ENCODE measurements at regions of chr5 and their contacts with region 1.

Region 1: GRCh38 chr5:111530298-111530740 is 18.0 kb upstream of the STARD4 start:
- DNase-seq: peak; percentile 57
- ATAC-seq: peak; percentile 98
- H3K4me3 ChIP-seq: no peak overlapping the region
- H3K27ac ChIP-seq: peak overlapping the region; percentile 37; the same call in 1 of the 2 replicates
- H3K4me1 ChIP-seq: peaks cover 4% of the 10 kb centered on the region
- H3K27me3 ChIP-seq: no peaks in the 10 kb centered on the region
- CTCF ChIP-seq: no peak
- EP300 ChIP-seq: no peak
- POLR2A ChIP-seq: peak; percentile 39; the same call in 1 of the 2 replicates
- RAD21 ChIP-seq: no peak

Region 2: GRCh38 chr5:111494364-111494999 is 35.8 kb before region 1 on chr5:
- CTCF ChIA-PET with region 1: interaction called, 13 read pairs
- POLR2A ChIA-PET with region 1: no interaction called
- RAD21 ChIA-PET with region 1: interaction called, 3 read pairs
- SMC1A ChIA-PET with region 1: interaction called, 6 read pairs
- in situ Hi-C with region 1: no loop called
- intact Hi-C with region 1: no loop called
- DNase-seq: peak; percentile 35
- ATAC-seq: peak; percentile 50
- H3K4me3 ChIP-seq: no peak overlapping the region
- H3K27ac ChIP-seq: peak overlapping the region; percentile 62
- H3K4me1 ChIP-seq: peaks cover 15% of the 10 kb centered on the region; the same call in 1 of the 2 replicates
- H3K27me3 ChIP-seq: no peaks in the 10 kb centered on the region
- CTCF ChIP-seq: no peak
- EP300 ChIP-seq: peak in 1 of 2 experiments; percentile 14; a peak in 1 of 4 replicates
- POLR2A ChIP-seq: no peak
- RAD21 ChIP-seq: no peak

Region 3: GRCh38 chr5:111517853-111518501 is 12.3 kb before region 1 on chr5:
- CTCF ChIA-PET with region 1: interaction called, 80 read pairs
- POLR2A ChIA-PET with region 1: interaction called, 5 read pairs
- RAD21 ChIA-PET with region 1: interaction called, 4 read pairs
- SMC1A ChIA-PET with region 1: interaction called, 49 read pairs
- in situ Hi-C with region 1: no loop called
- intact Hi-C with region 1: no loop called
- DNase-seq: peak; percentile 64
- ATAC-seq: peak; percentile 81
- H3K4me3 ChIP-seq: no peak overlapping the region
- H3K27ac ChIP-seq: peak overlapping the region; percentile 54
- H3K4me1 ChIP-seq: peaks cover 19% of the 10 kb centered on the region
- H3K27me3 ChIP-seq: no peaks in the 10 kb centered on the region
- CTCF ChIP-seq: no peak
- EP300 ChIP-seq: peak in 1 of 2 experiments; percentile 40; a peak in 1 of 4 replicates
- POLR2A ChIP-seq: no peak
- RAD21 ChIP-seq: no peak

Region 4: DNA sequence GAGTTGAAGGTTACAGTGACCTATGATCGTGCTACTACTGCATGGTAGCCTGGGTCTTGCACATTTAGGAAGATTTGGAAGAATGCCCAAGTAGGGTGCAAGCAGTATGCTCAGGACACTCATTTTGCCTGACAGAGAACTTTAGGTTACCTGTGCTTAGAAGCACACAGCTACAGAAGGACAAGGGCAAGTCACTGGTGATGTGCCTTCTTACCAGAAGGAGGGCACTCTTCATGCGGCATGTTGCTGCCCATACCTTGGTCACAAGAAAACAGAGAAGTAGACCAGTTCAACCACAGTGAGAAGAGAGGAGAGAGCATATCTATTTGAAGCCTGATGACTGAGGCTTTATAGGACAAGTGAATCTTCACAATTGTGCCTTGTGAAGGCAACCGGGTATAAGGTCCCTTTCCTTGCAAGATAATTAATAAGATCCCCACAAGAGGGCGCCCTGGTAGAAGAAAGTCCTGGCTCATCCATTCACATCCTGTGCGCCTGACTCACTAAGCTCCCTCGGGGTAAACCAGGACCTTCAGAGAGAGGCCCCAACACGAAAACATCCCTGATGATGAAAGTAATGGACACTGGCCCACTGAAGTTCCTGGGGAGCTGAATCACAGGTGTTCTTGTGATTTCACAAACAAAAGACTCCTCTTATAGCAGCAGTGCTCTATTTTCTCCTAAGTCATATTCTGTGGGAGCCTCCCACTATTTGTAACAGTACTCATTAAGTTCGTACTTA is 20.1 kb after region 1 on chr5:
- CTCF ChIA-PET with region 1: interaction called, 28 read pairs
- POLR2A ChIA-PET with region 1: no interaction called
- RAD21 ChIA-PET with region 1: interaction called, 13 read pairs
- SMC1A ChIA-PET with region 1: interaction called, 17 read pairs
- in situ Hi-C with region 1: no loop called
- intact Hi-C with region 1: no loop called
- DNase-seq: peak; percentile 50
- ATAC-seq: peak; percentile 99
- H3K4me3 ChIP-seq: no peak overlapping the region
- H3K27ac ChIP-seq: no peak overlapping the region
- H3K4me1 ChIP-seq: no peaks in the 10 kb centered on the region
- H3K27me3 ChIP-seq: no peaks in the 10 kb centered on the region
- CTCF ChIP-seq: peak; percentile 50 to 76 (median 56)
- EP300 ChIP-seq: no peak
- POLR2A ChIP-seq: no peak
- RAD21 ChIP-seq: peak; percentile 91

Region 5: GRCh38 chr5:111574311-111574710 is 44.0 kb after region 1 on chr5:
- CTCF ChIA-PET with region 1: no interaction called
- POLR2A ChIA-PET with region 1: no interaction called
- RAD21 ChIA-PET with region 1: no interaction called
- SMC1A ChIA-PET with region 1: no interaction called
- in situ Hi-C with region 1: no loop called
- intact Hi-C with region 1: no loop called
- DNase-seq: no peak
- ATAC-seq: no peak
- H3K4me3 ChIP-seq: no peak overlapping the region
- H3K27ac ChIP-seq: no peak overlapping the region
- H3K4me1 ChIP-seq: no peaks in the 10 kb centered on the region
- H3K27me3 ChIP-seq: no peaks in the 10 kb centered on the region
- CTCF ChIP-seq: no peak
- EP300 ChIP-seq: no peak
- POLR2A ChIP-seq: no peak
- RAD21 ChIP-seq: no peak

Region 6: GRCh38 chr5:111820072-111820471 is 289.8 kb after region 1 on chr5:
- CTCF ChIA-PET with region 1: interaction called, 14 read pairs
- POLR2A ChIA-PET with region 1: no interaction called
- RAD21 ChIA-PET with region 1: interaction called, 6 read pairs
- SMC1A ChIA-PET with region 1: interaction called, 4 read pairs
- in situ Hi-C with region 1: no loop called
- intact Hi-C with region 1: no loop called
- DNase-seq: no peak
- ATAC-seq: no peak
- H3K4me3 ChIP-seq: no peak overlapping the region
- H3K27ac ChIP-seq: no peak overlapping the region
- H3K4me1 ChIP-seq: no peaks in the 10 kb centered on the region
- H3K27me3 ChIP-seq: no peaks in the 10 kb centered on the region
- CTCF ChIP-seq: 0 out of 6 replicates have a peak, but pooled peaks of 1 of the 3 experiments have one; percentile 4
- EP300 ChIP-seq: no peak
- POLR2A ChIP-seq: no peak
- RAD21 ChIP-seq: no peak

Region 7: GRCh38 chr5:111954516-111955395 is 424.4 kb after region 1 on chr5:
- CTCF ChIA-PET with region 1: no interaction called
- POLR2A ChIA-PET with region 1: no interaction called
- RAD21 ChIA-PET with region 1: no interaction called
- SMC1A ChIA-PET with region 1: no interaction called
- in situ Hi-C with region 1: no loop called
- intact Hi-C with region 1: no loop called
- DNase-seq: peak; percentile 28
- ATAC-seq: peak; percentile 93
- H3K4me3 ChIP-seq: no peak overlapping the region
- H3K27ac ChIP-seq: peak overlapping the region; percentile 41; the same call in 1 of the 2 replicates
- H3K4me1 ChIP-seq: peaks cover 4% of the 10 kb centered on the region; the same call in 1 of the 2 replicates
- H3K27me3 ChIP-seq: no peaks in the 10 kb centered on the region
- CTCF ChIP-seq: no peak
- EP300 ChIP-seq: no peak
- POLR2A ChIP-seq: no peak
- RAD21 ChIP-seq: no peak